OCI-LY7 (cell line): ENCODE measurements at regions of chr1 and their contacts with region 1.

Region 1: GRCh38 chr1:20361806-20362640 is 71.3 kb downstream of the VWA5B1 start:
- DNase-seq: peak; percentile 65
- H3K4me3 ChIP-seq: no peak overlapping the region
- H3K27ac ChIP-seq: no peak overlapping the region
- H3K4me1 ChIP-seq: peaks cover 48% of the 10 kb centered on the region
- CTCF ChIP-seq: peak; percentile 99

Region 2: DNA sequence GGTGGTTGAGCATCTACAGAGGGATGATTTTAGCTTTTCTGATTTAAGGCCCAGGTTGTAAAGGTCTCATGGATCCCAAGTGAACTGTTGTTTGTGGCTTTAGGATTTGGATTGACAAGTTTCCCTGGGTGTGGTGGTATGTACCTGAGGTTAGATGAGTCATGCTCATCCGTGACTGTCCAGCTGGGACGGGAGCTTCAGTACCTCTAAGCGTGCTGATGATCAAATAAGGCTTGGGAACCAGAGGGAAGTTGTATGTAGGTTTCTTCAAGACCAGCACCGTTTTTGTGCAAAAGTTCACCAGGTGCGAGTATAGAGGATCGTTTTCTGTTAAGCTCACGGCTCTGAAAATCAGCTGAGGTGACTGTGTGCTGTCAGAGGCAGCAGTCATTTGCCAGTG is 458.4 kb before region 1 on chr1:
- CTCF ChIA-PET with region 1: no interaction called
- POLR2A ChIA-PET with region 1: no interaction called
- intact Hi-C with region 1: no loop called
- DNase-seq: no peak
- H3K4me3 ChIP-seq: no peak overlapping the region
- H3K27ac ChIP-seq: no peak overlapping the region
- H3K4me1 ChIP-seq: no peaks in the 10 kb centered on the region
- CTCF ChIP-seq: no peak

Region 3: DNA sequence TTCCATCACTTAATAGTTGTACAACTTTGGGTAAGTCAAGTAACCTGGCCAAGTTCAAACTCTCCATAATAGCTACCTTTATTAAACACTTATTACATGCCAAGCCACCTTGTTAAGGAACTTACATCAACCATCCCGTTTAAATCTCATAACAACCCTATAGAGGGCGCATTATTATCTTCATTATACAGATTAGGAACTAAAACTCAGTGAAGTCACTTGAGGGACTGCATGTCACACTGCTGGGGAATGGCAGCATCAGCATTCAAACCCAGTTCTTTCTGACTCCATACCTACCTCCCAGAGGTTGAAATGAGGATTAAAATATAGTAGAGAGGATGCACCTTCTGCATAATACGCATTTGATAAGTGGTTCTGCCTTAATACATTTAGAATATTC is 128.6 kb before region 1 on chr1:
- CTCF ChIA-PET with region 1: no interaction called
- POLR2A ChIA-PET with region 1: no interaction called
- intact Hi-C with region 1: loop called (anchors 2 kb)
- DNase-seq: peak; percentile 78
- H3K4me3 ChIP-seq: no peak overlapping the region
- H3K27ac ChIP-seq: no peak overlapping the region
- H3K4me1 ChIP-seq: peaks cover 4% of the 10 kb centered on the region
- CTCF ChIP-seq: peak; percentile 85

Region 4: DNA sequence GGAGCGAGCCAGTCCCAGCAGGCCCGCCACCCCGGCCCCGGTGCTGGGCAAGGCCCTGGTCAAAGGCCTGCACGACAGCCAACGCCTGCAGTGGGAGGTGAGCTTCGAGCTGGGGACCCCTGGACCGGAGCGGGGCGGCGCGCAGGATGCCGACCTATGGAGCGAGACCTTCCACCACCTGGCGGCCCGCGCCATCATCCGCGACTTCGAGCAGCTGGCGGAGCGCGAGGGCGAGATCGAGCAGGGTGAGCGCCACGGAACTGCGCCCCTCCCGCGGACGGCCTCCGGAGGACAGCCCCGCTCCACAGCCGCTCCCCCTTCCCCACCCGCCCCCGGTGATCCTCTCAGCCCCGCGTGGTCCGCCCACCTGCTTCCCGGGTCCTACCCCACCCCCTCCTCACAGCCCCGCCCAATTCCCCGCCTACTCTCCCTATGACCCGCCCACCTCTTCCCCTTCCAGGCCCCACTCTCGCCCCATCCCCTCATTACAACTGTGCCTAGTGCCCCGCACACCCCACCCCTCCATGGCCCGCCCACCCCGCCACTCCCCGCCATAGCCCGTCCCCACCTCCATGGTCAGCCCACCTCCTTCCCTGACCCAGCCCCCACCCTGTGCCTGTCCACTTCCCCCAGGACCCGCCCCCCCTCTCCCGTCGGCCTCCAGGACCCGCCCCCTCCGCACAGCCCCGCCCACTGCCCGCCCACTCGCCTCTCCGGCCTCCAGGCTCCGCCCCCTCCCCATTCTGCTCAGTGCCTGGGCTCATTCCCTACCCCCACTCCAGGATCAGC is 18.7 kb before region 1 on chr1:
- CTCF ChIA-PET with region 1: no interaction called
- POLR2A ChIA-PET with region 1: interaction called, 3 read pairs
- intact Hi-C with region 1: loop called (anchors 1 kb)
- DNase-seq: peak; percentile 95
- H3K4me3 ChIP-seq: peak overlapping the region; percentile 58
- H3K27ac ChIP-seq: peak overlapping the region; percentile 24
- H3K4me1 ChIP-seq: peaks cover 26% of the 10 kb centered on the region
- CTCF ChIP-seq: no peak

Region 5: DNA sequence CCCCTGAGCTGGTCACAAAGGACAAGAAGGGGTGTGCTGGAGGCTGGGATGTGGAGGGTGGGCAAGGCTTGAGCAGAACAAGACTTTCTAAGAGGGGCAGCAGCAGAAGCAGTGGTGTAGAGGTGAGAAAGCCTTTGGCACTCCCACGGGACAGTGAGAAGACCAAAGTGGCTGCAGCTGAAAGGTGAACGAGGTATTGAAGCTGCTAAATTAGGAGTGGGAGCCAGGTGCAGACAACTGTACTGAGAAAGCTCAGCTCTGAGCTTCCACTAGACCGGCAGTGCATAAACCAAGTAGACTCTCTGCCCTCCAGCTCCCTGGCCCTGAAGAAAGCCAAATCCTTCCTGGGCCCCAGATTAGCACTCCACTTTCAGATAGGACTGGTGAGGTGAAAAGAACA is 21.6 kb after region 1 on chr1:
- CTCF ChIA-PET with region 1: interaction called, 7 read pairs
- POLR2A ChIA-PET with region 1: interaction called, 9 read pairs
- intact Hi-C with region 1: loop called (anchors 1 kb)
- DNase-seq: peak; percentile 95
- H3K4me3 ChIP-seq: peak overlapping the region; percentile 42
- H3K27ac ChIP-seq: peak overlapping the region; percentile 90
- H3K4me1 ChIP-seq: peaks cover 94% of the 10 kb centered on the region
- CTCF ChIP-seq: no peak

Region 6: GRCh38 chr1:20399606-20400180 is 37.7 kb after region 1 on chr1:
- CTCF ChIA-PET with region 1: no interaction called
- POLR2A ChIA-PET with region 1: no interaction called
- intact Hi-C with region 1: no loop called
- DNase-seq: no peak
- H3K4me3 ChIP-seq: no peak overlapping the region
- H3K27ac ChIP-seq: no peak overlapping the region
- H3K4me1 ChIP-seq: peaks cover 38% of the 10 kb centered on the region
- CTCF ChIP-seq: no peak

Region 7: GRCh38 chr1:20430355-20431175 is 68.5 kb after region 1 on chr1:
- CTCF ChIA-PET with region 1: interaction called, 9 read pairs
- POLR2A ChIA-PET with region 1: interaction called, 6 read pairs
- intact Hi-C with region 1: loop called (anchors 1 kb)
- DNase-seq: peak; percentile 75
- H3K4me3 ChIP-seq: no peak overlapping the region
- H3K27ac ChIP-seq: no peak overlapping the region
- H3K4me1 ChIP-seq: peaks cover 48% of the 10 kb centered on the region
- CTCF ChIP-seq: peak; percentile 98